Heart right ventricle (tissue), 16 donors: ENCODE measurements at regions of chr1 and their contacts with region 1.

Region 1: DNA sequence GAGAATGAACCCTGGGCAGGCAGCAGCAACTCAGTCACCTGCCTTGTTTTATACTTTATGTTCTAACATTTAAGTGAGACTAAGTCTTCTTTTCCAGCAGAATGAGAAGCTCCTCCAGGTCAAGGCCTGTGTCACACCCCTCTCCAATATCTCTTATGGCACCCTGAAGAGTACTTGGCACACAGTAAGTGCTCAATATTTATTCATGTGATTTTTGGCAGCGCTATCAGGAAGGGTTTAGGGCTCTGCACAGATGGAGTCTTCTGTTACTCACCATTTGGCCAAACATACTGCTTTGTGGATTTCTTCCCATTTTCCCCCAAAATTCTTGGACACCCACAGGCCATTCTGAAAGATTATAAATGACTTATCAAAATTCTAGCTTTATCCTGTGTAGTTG is 43.8 kb upstream of the MYBPHL start:
- DNase-seq: no peak
- ATAC-seq: no peak
- H3K4me3 ChIP-seq: no peak overlapping the region
- H3K27ac ChIP-seq: no peak overlapping the region
- H3K4me1 ChIP-seq: peaks cover 0 to 17% (median 0%) of the 10 kb centered on the region in 9 donors
- H3K27me3 ChIP-seq: no peaks in the 10 kb centered on the region
- CTCF ChIP-seq: no peak

Region 2: DNA sequence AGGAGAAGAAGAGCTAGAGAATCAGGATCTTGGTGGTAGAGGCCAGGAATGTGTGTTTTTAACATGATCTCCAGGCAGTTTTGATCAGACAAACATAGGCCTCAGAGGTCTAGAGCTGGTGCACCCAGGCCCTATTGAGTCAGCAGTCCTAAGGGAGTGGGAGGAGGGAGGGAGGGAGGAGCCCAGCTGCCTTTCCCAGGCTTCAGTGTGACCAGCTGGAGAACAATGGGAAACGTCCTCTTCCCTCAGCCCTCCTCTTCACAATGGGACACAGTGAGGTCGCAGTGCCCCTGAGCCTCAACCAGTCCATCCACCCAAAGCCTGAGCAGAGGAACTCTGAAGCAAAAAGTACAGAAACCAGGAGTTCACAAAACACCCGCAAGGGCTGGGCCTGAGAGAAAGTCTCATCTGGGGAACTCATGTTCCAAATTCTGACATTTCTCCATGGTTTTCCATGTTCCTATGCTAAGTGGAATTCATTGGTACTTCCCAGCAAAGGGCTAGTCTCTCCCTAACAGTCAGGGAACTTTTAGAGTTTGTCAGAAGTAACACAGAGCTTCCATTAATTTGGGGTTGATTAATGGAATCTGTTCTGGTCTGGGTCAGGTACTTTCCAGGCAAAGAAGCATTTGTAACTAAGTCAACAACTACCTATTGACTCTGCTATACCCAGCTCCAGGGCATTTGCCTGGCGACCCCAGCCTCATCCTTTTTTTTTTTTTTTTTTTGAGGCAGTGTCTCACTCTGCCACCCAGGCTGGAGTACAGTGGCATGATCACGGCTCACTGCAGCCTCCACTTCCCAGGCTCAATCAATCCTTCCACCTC is 199.3 kb before region 1 on chr1:
- intact Hi-C with region 1: no loop called
- DNase-seq: peak; percentile 34 to 50
- ATAC-seq: peak; percentile 58 to 93 (median 90)
- H3K4me3 ChIP-seq: no peak overlapping the region
- H3K27ac ChIP-seq: peak overlapping the region in 4 of 10 donors; percentile 31 to 62 (median 49)
- H3K4me1 ChIP-seq: peaks cover 0 to 21% (median 11%) of the 10 kb centered on the region in 9 donors
- H3K27me3 ChIP-seq: no peaks in the 10 kb centered on the region
- CTCF ChIP-seq: no peak

Region 3: DNA sequence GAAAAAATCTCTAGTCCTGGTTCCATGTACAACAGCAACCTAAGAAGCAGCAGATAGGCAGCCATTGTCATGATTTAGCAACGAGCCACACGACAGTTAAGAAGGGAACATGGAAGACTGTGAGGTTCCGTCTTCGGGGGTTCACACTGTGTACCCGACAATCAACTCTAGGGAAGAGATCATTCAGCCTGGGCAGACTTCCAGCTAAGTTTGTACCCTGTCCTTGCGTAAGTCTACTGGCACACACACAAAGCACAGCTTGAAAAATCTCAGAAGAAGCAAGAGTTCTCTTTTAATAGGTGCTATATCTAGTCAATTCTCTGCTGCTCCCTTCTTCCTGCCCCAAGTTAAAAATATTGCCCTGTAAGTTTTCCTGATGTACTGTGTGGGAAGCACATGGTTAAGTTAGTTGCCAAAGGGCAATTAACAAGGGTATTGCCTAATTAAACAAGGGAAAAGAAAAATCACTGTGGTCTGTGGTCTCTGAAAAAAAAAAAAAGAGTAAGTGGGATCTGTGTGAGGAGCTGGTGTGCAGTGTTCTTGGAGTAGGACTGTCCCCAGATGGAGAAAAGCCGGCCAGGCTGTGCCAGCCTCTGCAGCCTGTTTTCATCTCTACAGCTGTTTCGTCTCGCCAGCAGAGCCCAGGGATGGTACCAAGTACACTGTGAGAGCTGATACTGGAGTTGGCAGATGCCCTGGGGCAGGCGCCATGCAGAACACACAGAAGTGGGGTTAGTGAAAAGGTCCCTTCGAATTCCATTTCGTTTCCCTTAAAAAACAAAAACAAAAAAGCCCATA is 37.5 kb before region 1 on chr1:
- intact Hi-C with region 1: loop called in 1 of 10 experiments (anchors 5 kb)
- DNase-seq: no peak
- ATAC-seq: peak in 5 of 8 donors; percentile 38 to 80 (median 56)
- H3K4me3 ChIP-seq: no peak overlapping the region
- H3K27ac ChIP-seq: no peak overlapping the region
- H3K4me1 ChIP-seq: peaks cover 0 to 7% (median under 1%) of the 10 kb centered on the region in 9 donors
- H3K27me3 ChIP-seq: no peaks in the 10 kb centered on the region
- CTCF ChIP-seq: no peak